OCI-LY7 (cell line): ENCODE measurements at regions of chr11 and their contacts with region 1.

Region 1: GRCh38 chr11:40306938-40307548 is 1152.4 kb downstream of the LRRC4C start:
- DNase-seq: peak; percentile 26
- H3K4me3 ChIP-seq: no peak overlapping the region
- H3K27ac ChIP-seq: no peak overlapping the region
- H3K4me1 ChIP-seq: no peaks in the 10 kb centered on the region
- CTCF ChIP-seq: peak; percentile 80

Region 2: GRCh38 chr11:40290171-40290631 is 16.8 kb before region 1 on chr11:
- CTCF ChIA-PET with region 1: no interaction called
- POLR2A ChIA-PET with region 1: no interaction called
- intact Hi-C with region 1: no loop called
- DNase-seq: no peak
- H3K4me3 ChIP-seq: no peak overlapping the region
- H3K27ac ChIP-seq: no peak overlapping the region
- H3K4me1 ChIP-seq: no peaks in the 10 kb centered on the region
- CTCF ChIP-seq: no peak

Region 3: GRCh38 chr11:40370821-40371616 is 64.0 kb after region 1 on chr11:
- CTCF ChIA-PET with region 1: no interaction called
- POLR2A ChIA-PET with region 1: no interaction called
- intact Hi-C with region 1: no loop called
- DNase-seq: no peak
- H3K4me3 ChIP-seq: no peak overlapping the region
- H3K27ac ChIP-seq: no peak overlapping the region
- H3K4me1 ChIP-seq: no peaks in the 10 kb centered on the region
- CTCF ChIP-seq: no peak

Region 4: GRCh38 chr11:41201156-41201555 is 894.1 kb after region 1 on chr11:
- CTCF ChIA-PET with region 1: no interaction called
- POLR2A ChIA-PET with region 1: no interaction called
- intact Hi-C with region 1: loop called (anchors 10 kb)
- DNase-seq: peak; percentile 26
- H3K4me3 ChIP-seq: no peak overlapping the region
- H3K27ac ChIP-seq: no peak overlapping the region
- H3K4me1 ChIP-seq: no peaks in the 10 kb centered on the region
- CTCF ChIP-seq: peak; percentile 71

Region 5: GRCh38 chr11:41431784-41432183 is 1124.7 kb after region 1 on chr11:
- CTCF ChIA-PET with region 1: no interaction called
- POLR2A ChIA-PET with region 1: no interaction called
- intact Hi-C with region 1: loop called (anchors 2 kb)
- DNase-seq: peak; percentile 29
- H3K4me3 ChIP-seq: no peak overlapping the region
- H3K27ac ChIP-seq: no peak overlapping the region
- H3K4me1 ChIP-seq: no peaks in the 10 kb centered on the region
- CTCF ChIP-seq: peak; percentile 80